Activated B cell treated with CpG ODN at 0.5 μM for 24 hours (primary cell): ENCODE measurements at regions of chrX and their contacts with region 1.

Region 1: GRCh38 chrX:12567857-12568256 is 223.4 kb upstream of the PRPS2 start:
- DNase-seq: no peak
- ATAC-seq: no peak
- H3K4me3 Mint-ChIP-seq: no peak overlapping the region
- H3K27ac Mint-ChIP-seq: no peak overlapping the region
- H3K4me1 Mint-ChIP-seq: peaks cover 6% of the 10 kb centered on the region
- H3K27me3 Mint-ChIP-seq: no peaks in the 10 kb centered on the region
- CTCF ChIP-seq: no peak

Region 2: DNA sequence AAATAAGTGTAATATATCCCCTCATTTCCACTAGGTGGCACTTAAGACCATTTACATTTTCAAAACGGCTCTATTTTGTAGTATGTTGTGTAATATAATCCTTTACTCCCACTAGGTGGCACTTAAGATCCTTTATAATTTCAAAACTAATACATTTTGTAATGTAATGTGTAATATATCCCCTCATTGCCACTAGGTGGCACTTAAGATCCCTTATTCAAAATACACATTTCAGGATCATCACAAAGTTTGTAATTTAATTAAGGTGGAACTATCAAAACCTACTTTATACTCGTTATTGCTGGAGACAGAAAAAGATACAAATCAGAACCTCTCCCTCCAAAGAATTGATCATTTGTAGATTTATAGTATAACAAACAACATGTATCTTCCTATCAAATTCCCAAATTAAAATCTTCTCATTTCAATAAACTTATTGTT is 1034.6 kb before region 1 on chrX:
- CTCF ChIA-PET with region 1: no interaction called
- POLR2A ChIA-PET with region 1: no interaction called
- intact Hi-C with region 1: loop called (anchors 2 kb)
- DNase-seq: no peak
- ATAC-seq: peak; percentile 99
- H3K4me3 Mint-ChIP-seq: no peak overlapping the region
- H3K27ac Mint-ChIP-seq: no peak overlapping the region
- H3K4me1 Mint-ChIP-seq: peaks cover 3% of the 10 kb centered on the region
- H3K27me3 Mint-ChIP-seq: no peaks in the 10 kb centered on the region
- CTCF ChIP-seq: peak; percentile 44

Region 3: DNA sequence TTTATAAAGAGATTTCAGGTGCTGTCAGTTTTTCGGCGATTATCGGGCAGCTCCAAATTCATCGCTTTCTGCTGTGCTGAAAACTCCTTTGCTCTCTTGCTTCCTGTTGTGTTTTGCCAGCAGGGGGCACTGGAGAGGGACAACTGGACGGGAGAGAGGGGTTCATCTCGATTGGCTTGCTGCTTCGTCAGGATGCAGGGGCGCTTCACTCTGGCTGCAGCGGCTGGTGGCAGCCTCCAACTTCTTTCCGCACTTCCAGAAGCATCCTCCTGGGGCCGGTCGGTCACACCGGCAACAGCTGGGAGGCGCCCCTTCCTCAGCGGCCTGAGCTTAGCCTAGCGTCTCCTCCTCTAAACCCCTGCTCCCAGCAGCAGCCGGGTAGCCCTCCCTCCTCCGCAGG is 780.3 kb before region 1 on chrX:
- CTCF ChIA-PET with region 1: no interaction called
- POLR2A ChIA-PET with region 1: no interaction called
- intact Hi-C with region 1: loop called (anchors 5 kb)
- DNase-seq: peak; percentile 46
- ATAC-seq: peak; percentile 65
- H3K4me3 Mint-ChIP-seq: peak overlapping the region; percentile 53
- H3K27ac Mint-ChIP-seq: no peak overlapping the region
- H3K4me1 Mint-ChIP-seq: peaks cover 27% of the 10 kb centered on the region
- H3K27me3 Mint-ChIP-seq: no peaks in the 10 kb centered on the region
- CTCF ChIP-seq: no peak

Region 4: DNA sequence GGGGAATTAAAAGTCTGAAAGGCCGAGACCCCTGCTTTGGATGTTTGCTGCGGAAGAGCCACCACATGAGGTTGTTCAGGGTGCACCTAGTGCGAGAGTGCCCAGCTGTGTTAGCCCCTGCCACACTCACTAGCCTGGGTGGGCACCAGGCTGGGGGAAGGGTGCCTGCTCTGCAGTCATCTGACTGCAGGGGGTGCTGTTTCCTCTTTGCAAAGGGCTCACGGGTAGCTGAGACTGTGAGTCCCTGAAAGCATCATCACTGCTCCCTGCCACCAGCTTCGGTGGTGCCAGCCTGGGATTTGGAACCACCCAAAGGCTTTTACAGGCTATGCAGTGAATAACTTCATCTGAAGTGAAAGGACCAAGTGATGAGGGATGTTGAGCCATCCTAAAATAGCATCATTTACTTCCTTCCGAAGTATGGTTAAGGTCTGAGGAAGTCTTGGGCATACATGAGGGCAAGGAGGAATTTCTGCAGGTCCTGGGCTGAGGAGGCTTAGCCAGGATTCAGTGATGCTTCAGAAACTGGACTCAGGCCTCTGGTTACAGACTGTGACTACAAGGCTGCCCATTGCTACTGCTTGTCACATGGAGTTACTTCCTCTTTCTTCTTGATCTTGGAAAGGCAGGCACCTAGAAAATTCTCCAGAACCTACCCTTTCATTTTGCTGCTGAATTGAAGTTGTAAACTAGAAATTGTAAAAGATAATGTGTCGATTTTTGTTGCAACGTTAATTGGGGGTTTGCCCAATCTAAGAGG is 69.8 kb before region 1 on chrX:
- CTCF ChIA-PET with region 1: no interaction called
- POLR2A ChIA-PET with region 1: no interaction called
- intact Hi-C with region 1: loop called (anchors 5 kb)
- DNase-seq: no peak
- ATAC-seq: peak; percentile 31
- H3K4me3 Mint-ChIP-seq: no peak overlapping the region
- H3K27ac Mint-ChIP-seq: no peak overlapping the region
- H3K4me1 Mint-ChIP-seq: peaks cover 19% of the 10 kb centered on the region
- H3K27me3 Mint-ChIP-seq: no peaks in the 10 kb centered on the region
- CTCF ChIP-seq: no peak

Region 5: GRCh38 chrX:12580548-12580947 is 12.7 kb after region 1 on chrX:
- CTCF ChIA-PET with region 1: no interaction called
- POLR2A ChIA-PET with region 1: no interaction called
- intact Hi-C with region 1: no loop called
- DNase-seq: no peak
- ATAC-seq: no peak
- H3K4me3 Mint-ChIP-seq: no peak overlapping the region
- H3K27ac Mint-ChIP-seq: no peak overlapping the region
- H3K4me1 Mint-ChIP-seq: no peaks in the 10 kb centered on the region
- H3K27me3 Mint-ChIP-seq: no peaks in the 10 kb centered on the region
- CTCF ChIP-seq: no peak

Region 6: DNA sequence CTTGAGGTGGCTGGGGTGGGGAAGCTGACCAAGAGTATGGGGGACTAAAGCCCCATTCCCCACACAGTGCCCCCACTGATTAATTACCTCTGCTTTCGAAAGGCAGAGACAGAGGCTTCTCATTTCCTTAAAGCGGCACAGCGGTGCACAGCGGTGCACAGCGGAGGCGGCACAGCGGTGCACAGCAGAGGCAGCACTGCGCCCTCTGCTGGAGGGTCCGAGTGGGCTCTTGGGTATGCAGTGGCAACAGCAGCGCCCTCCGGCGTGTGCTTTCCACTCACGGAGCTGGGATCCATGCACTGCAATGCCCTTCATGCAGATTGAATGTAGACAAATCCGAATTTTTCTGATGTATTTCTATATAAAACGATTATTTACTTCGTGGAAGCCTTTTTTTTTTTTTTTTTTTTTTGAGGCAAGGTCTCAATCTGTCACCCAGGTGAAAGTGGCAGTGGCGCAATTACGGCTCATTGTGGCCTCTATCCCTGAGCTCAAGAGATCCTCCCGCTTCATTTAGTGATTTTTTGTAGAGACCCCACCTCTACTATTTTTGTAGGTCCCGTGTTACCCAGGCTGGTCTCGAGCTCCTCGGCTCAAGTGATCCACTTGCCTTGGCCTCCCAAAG is 203.7 kb after region 1 on chrX:
- CTCF ChIA-PET with region 1: no interaction called
- POLR2A ChIA-PET with region 1: no interaction called
- intact Hi-C with region 1: loop called (anchors 10 kb)
- DNase-seq: peak; percentile 53
- ATAC-seq: peak; percentile 100
- H3K4me3 Mint-ChIP-seq: no peak overlapping the region
- H3K27ac Mint-ChIP-seq: no peak overlapping the region
- H3K4me1 Mint-ChIP-seq: peaks cover 9% of the 10 kb centered on the region
- H3K27me3 Mint-ChIP-seq: no peaks in the 10 kb centered on the region
- CTCF ChIP-seq: no peak